Dorsolateral prefrontal cortex (tissue), 120 donors: ENCODE measurements at regions of chr14 and their contacts with region 1.

Region 1: GRCh38 chr14:92106143-92106926 is at the start of gene ATXN3:
- DNase-seq: peak; percentile 96 to 99 (median 98)
- H3K4me3 ChIP-seq: peak within 1 kb of the TSS; percentile 58 to 100 (median 93)
- H3K27ac ChIP-seq: peak within 1 kb of the TSS; percentile 75 to 99 (median 95)
- H3K27me3 ChIP-seq: no peaks in the 10 kb centered on the region
- CTCF ChIP-seq: peak; percentile 70 to 94 (median 85)
- total RNA-seq, gene ATXN3: 31.2 to 63.2 (median 46.6) TPM

Region 2: DNA sequence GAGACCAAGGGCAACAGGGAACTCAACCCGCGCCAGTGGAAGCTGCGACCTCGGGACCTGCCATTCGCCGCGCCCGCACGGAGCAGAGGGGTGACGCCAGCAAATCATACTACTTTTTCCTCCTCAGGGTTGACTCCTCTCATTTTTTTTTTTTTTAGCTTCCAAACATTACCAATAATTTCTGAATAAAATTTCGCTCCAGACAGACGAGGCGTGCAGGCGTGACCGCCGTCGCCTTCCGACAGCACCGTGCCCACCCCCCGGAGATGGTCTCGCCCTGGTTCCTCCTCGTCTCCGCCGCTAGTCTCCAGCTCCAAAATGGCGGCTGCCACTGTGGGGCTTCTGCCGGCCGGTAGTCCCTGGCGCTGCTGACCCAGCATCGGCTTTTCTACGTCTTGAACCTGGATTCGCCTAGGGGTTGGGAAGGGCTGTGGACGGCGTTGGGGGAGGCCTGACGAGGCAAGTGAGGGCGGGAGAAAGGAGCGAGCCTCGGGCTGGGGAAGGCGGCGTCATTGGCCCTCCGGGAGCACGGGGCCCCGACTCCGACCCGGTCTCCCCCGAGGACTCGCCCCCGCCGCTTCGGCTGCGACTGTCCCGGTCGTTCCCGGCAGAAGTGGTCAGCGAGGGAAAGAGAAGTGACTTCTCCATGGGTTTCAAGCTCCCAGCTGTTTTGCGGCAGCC is 15.5 kb after region 1 on chr14 and contains the starts of genes CPSF2 and NDUFB1:
- intact Hi-C with region 1: loop called (anchors 1 to 2 kb)
- DNase-seq: peak; percentile 72 to 91 (median 88)
- H3K4me3 ChIP-seq: peak within 1 kb of the TSS; percentile 72 to 99 (median 94)
- H3K27ac ChIP-seq: peak within 1 kb of the TSS; percentile 69 to 99 (median 96)
- H3K27me3 ChIP-seq: no peaks in the 10 kb centered on the region
- CTCF ChIP-seq: peak in 34 of 56 donors; percentile 2 to 52 (median 26)
- total RNA-seq, gene CPSF2: 26.8 to 56.4 (median 40.4) TPM
- total RNA-seq, gene NDUFB1: 64.8 to 207 (median 138) TPM